ENCODE measurements at regions of chr11 and their contacts with region 1.

Region 1: GRCh38 chr11:119721129-119722120 is 7.6 kb downstream of the NECTIN1 start:
- DNase-seq: no peak
- ATAC-seq: peak; percentile 64
- H3K4me3 ChIP-seq: no peak overlapping the region
- H3K27ac ChIP-seq: no peak overlapping the region
- H3K4me1 ChIP-seq: no peaks in the 10 kb centered on the region
- H3K27me3 ChIP-seq: no peaks in the 10 kb centered on the region
- CTCF ChIP-seq: peak; percentile 49

Region 2: DNA sequence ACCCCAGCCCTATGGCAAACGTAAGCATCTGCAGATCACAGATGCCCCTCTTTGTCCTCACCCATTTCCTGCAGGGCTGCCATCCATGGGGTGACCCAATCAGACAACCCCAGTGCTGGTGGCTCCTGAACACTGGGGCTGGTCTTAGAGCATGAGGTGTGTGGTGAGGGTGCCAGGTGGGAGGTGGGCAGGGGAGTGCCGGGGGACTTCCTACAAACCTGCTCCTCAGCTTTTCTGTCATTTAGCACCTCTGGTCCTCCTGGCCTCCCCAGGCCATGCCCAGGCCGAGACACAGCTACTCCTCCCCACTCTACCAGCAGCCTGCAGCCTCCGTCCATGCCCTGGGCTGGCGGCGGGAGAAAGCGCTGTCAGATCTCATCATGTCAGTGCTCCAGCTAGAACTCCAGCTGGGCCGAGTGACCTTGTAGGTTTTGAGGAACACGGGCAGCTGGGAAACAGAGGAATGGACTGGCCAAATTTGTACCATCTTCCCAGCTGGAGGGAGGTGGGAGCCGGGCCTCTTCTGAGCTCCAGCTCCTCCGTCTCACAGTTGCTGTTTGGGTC is 165.3 kb after region 1 on chr11:
- CTCF ChIA-PET with region 1: no interaction called
- POLR2A ChIA-PET with region 1: interaction called, 20 read pairs
- in situ Hi-C with region 1: no loop called
- intact Hi-C with region 1: no loop called
- DNase-seq: no peak
- ATAC-seq: no peak
- H3K4me3 ChIP-seq: no peak overlapping the region
- H3K27ac ChIP-seq: no peak overlapping the region
- H3K4me1 ChIP-seq: no peaks in the 10 kb centered on the region
- H3K27me3 ChIP-seq: peaks cover 16% of the 10 kb centered on the region
- CTCF ChIP-seq: no peak

Measured in Panc1 (cell line).